SK-N-SH (cell line): ENCODE measurements at regions of chr1 and their contacts with region 1.

Region 1: GRCh38 chr1:30718636-30719405 is 4.6 kb downstream of the MATN1 start:
- DNase-seq: peak; percentile 93
- H3K4me3 ChIP-seq: peak overlapping the region; percentile 62 to 65
- H3K27ac ChIP-seq: peak overlapping the region; percentile 89 to 95
- H3K4me1 ChIP-seq: peaks cover 3 to 14% of the 10 kb centered on the region in 2 experiments; a peak in 2 of 4 replicates
- H3K27me3 ChIP-seq: no peaks in the 10 kb centered on the region
- CTCF ChIP-seq: peak; percentile 95
- EP300 ChIP-seq: no peak
- RAD21 ChIP-seq: no peak

Region 2: GRCh38 chr1:30732277-30732996 is 13.6 kb after region 1 on chr1:
- CTCF ChIA-PET with region 1: interaction called, 42 read pairs
- POLR2A ChIA-PET with region 1: interaction called, 7 read pairs
- DNase-seq: no peak
- H3K4me3 ChIP-seq: no peak overlapping the region
- H3K27ac ChIP-seq: no peak overlapping the region
- H3K4me1 ChIP-seq: peaks cover 6% of the 10 kb centered on the region in 2 experiments; a peak in 3 of 4 replicates
- H3K27me3 ChIP-seq: no peaks in the 10 kb centered on the region
- CTCF ChIP-seq: no peak
- EP300 ChIP-seq: no peak
- RAD21 ChIP-seq: no peak

Region 3: DNA sequence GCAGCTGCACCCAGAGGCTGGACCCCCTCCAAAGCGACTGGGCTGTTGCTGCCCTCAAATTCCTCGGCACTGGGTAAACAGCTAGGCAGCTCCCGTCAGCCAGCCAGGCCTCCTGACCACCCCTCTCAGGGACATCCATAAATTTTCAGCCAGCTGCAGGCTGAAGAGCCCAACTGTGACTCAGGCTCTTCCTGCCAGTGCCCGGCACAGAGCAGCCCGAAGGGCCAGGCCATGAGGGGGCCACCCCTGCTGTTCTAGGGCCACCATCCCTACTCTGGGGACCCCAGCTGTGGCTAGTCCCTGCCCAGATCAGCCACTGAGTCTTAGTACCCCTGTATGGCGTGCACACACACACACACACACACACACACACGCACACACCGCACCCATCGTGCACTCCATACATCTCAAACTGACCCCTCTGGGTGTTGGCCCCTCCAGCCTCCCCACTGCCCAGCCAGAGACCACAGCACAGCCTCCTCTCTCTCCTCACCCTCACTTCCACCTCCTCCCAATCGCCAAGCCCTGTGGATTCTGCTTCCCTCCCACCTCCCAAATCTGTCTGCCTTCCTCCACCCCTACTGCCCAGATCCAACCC is 44.9 kb after region 1 on chr1:
- CTCF ChIA-PET with region 1: interaction called, 26 read pairs
- POLR2A ChIA-PET with region 1: no interaction called
- DNase-seq: no peak
- H3K4me3 ChIP-seq: no peak overlapping the region
- H3K27ac ChIP-seq: no peak overlapping the region
- H3K4me1 ChIP-seq: peaks cover 7 to 17% of the 10 kb centered on the region in 2 experiments; a peak in 2 of 4 replicates
- H3K27me3 ChIP-seq: no peaks in the 10 kb centered on the region
- CTCF ChIP-seq: no peak
- EP300 ChIP-seq: no peak
- RAD21 ChIP-seq: no peak

Region 4: GRCh38 chr1:30779294-30780071 is 60.7 kb after region 1 on chr1:
- CTCF ChIA-PET with region 1: interaction called, 377 read pairs
- POLR2A ChIA-PET with region 1: interaction called, 4 read pairs
- DNase-seq: peak; percentile 88
- H3K4me3 ChIP-seq: peak overlapping the region in 1 of 2 experiments; percentile 37; a peak in 1 of 4 replicates
- H3K27ac ChIP-seq: peak overlapping the region in 1 of 2 experiments; percentile 86; a peak in 2 of 4 replicates
- H3K4me1 ChIP-seq: peaks cover 0 to 20% of the 10 kb centered on the region in 2 experiments; a peak in 1 of 4 replicates
- H3K27me3 ChIP-seq: no peaks in the 10 kb centered on the region
- CTCF ChIP-seq: peak; percentile 92
- EP300 ChIP-seq: no peak
- RAD21 ChIP-seq: peak; percentile 89

Region 5: DNA sequence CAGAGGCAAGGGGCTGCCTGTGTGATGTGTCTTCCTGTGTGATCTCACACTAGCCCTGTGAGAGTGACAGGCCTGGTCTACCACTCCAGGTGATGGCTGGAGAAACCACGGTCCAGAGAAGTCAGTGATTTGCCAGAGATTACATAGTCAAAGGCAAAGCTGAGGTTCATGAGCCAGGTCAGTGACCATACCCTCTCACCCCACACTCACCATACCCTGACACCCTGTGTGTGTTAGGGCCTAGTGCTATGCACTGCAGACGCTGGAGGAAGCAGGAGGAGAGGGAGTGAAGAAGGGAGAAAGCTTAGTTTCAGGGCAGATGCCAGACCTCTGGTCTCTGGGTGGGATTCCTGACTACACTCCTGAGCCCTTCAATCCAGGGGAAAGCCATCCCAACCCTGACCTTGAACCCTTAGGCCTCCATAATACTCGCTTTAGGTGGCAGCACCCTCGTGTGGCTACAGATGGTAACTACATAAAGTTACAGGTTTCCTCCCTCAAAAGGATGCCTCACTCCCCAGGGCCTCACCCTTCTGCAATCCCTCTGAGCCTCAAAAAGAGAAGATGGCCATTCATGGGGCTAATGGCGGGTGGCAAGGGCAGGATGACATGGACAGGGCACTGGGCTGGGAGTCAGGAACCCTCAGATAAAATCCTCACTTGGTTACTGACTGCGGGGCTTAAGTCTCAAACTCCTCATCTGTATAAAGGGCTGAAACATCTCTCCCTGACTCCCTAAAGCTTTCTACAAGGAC is 210.5 kb after region 1 on chr1:
- CTCF ChIA-PET with region 1: interaction called, 20 read pairs
- POLR2A ChIA-PET with region 1: no interaction called
- DNase-seq: peak; percentile 70
- H3K4me3 ChIP-seq: peak overlapping the region in 1 of 2 experiments; percentile 32; a peak in 1 of 4 replicates
- H3K27ac ChIP-seq: peak overlapping the region in 1 of 2 experiments; percentile 31; a peak in 1 of 4 replicates
- H3K4me1 ChIP-seq: peaks cover 0 to 13% of the 10 kb centered on the region in 2 experiments; a peak in 1 of 4 replicates
- H3K27me3 ChIP-seq: no peaks in the 10 kb centered on the region
- CTCF ChIP-seq: peak; percentile 78
- EP300 ChIP-seq: no peak
- RAD21 ChIP-seq: peak; percentile 77